ENCODE measurements at regions of chr19 and their contacts with region 1.

Region 1: GRCh38 chr19:56170261-56170660 is 5.5 kb upstream of the GALP start:
- DNase-seq: no peak
- H3K4me3 ChIP-seq: no peak overlapping the region
- H3K27ac ChIP-seq: no peak overlapping the region
- H3K4me1 ChIP-seq: no peaks in the 10 kb centered on the region
- H3K27me3 ChIP-seq: peaks cover 0 to 2% of the 10 kb centered on the region in 2 experiments
- CTCF ChIP-seq: no peak
- POLR2A ChIP-seq: no peak

Region 2: GRCh38 chr19:56066152-56067023 is 103.9 kb before region 1 on chr19:
- CTCF ChIA-PET with region 1: interaction called, 48 read pairs
- POLR2A ChIA-PET with region 1: no interaction called
- dilution Hi-C with region 1: no loop called
- intact Hi-C with region 1: no loop called
- DNase-seq: peak; percentile 54
- H3K4me3 ChIP-seq: peak overlapping the region in 2 of 3 experiments; percentile 20 to 32
- H3K27ac ChIP-seq: no peak overlapping the region
- H3K4me1 ChIP-seq: peaks cover 7% of the 10 kb centered on the region
- H3K27me3 ChIP-seq: no peaks in the 10 kb centered on the region
- CTCF ChIP-seq: peak; percentile 91 to 95
- POLR2A ChIP-seq: no peak

Region 3: GRCh38 chr19:56105090-56105701 is 65.1 kb before region 1 on chr19:
- CTCF ChIA-PET with region 1: interaction called, 27 read pairs
- POLR2A ChIA-PET with region 1: interaction called, 3 read pairs
- dilution Hi-C with region 1: no loop called
- intact Hi-C with region 1: loop called (anchors 1 kb)
- DNase-seq: peak; percentile 54
- H3K4me3 ChIP-seq: no peak overlapping the region
- H3K27ac ChIP-seq: no peak overlapping the region
- H3K4me1 ChIP-seq: peaks cover 4% of the 10 kb centered on the region
- H3K27me3 ChIP-seq: no peaks in the 10 kb centered on the region
- CTCF ChIP-seq: peak; percentile 41 to 68
- POLR2A ChIP-seq: no peak

Region 4: GRCh38 chr19:56140583-56141416 is 29.5 kb before region 1 on chr19 and contains the start of gene ZNF444:
- CTCF ChIA-PET with region 1: interaction called, 6 read pairs
- POLR2A ChIA-PET with region 1: no interaction called
- dilution Hi-C with region 1: no loop called
- intact Hi-C with region 1: loop called (anchors 1 kb)
- DNase-seq: peak; percentile 100
- H3K4me3 ChIP-seq: peak within 1 kb of the TSS; percentile 57 to 73 (median 70)
- H3K27ac ChIP-seq: peak within 1 kb of the TSS; percentile 61
- H3K4me1 ChIP-seq: peaks cover 10% of the 10 kb centered on the region
- H3K27me3 ChIP-seq: no peaks in the 10 kb centered on the region
- CTCF ChIP-seq: no peak
- POLR2A ChIP-seq: peak; percentile 59
- total RNA-seq, gene ZNF444: 37.1 and 37.2 TPM in 2 replicates

Region 5: DNA sequence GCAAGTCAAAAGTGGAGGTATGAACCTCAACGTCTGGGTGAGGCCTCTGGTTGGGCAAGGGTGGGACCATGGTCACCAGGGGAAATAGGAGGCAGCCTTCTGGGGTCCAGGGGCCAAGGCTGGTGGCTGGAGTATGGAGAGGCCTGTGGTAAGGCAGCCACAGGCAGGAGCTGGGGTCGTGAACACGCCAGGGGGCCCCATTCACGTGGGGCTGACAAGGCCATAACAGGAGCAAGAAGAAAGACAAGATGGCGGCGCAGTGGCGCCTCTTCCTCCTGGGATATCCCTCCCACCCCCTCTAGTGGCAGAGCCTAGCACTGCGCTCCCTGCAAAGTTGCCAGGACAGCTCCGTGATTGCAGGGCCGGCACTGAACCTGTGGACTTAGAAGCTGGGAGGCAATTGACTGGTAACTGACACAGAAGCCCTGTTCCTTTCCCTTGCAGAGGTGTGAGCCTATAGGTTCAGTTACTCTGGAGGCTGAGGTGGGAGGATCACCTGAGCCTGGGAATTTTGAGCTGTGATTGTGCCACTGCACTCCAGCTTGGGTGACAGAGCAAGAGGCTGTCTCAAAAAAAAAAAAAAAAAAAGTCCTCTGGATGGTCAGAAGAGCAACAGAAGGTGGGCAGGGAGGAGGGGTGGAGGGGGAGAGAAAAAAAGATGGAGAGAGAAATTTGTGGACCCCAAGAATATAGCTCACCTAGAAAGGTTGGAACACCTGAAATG is 82.6 kb after region 1 on chr19:
- CTCF ChIA-PET with region 1: interaction called, 12 read pairs
- POLR2A ChIA-PET with region 1: no interaction called
- dilution Hi-C with region 1: no loop called
- intact Hi-C with region 1: loop called (anchors 5 kb)
- DNase-seq: peak; percentile 70
- H3K4me3 ChIP-seq: no peak overlapping the region
- H3K27ac ChIP-seq: no peak overlapping the region
- H3K4me1 ChIP-seq: no peaks in the 10 kb centered on the region
- H3K27me3 ChIP-seq: no peaks in the 10 kb centered on the region
- CTCF ChIP-seq: peak; percentile 88 to 94
- POLR2A ChIP-seq: no peak